ENCODE measurements at regions of chr1 and their contacts with region 1.

Region 1: DNA sequence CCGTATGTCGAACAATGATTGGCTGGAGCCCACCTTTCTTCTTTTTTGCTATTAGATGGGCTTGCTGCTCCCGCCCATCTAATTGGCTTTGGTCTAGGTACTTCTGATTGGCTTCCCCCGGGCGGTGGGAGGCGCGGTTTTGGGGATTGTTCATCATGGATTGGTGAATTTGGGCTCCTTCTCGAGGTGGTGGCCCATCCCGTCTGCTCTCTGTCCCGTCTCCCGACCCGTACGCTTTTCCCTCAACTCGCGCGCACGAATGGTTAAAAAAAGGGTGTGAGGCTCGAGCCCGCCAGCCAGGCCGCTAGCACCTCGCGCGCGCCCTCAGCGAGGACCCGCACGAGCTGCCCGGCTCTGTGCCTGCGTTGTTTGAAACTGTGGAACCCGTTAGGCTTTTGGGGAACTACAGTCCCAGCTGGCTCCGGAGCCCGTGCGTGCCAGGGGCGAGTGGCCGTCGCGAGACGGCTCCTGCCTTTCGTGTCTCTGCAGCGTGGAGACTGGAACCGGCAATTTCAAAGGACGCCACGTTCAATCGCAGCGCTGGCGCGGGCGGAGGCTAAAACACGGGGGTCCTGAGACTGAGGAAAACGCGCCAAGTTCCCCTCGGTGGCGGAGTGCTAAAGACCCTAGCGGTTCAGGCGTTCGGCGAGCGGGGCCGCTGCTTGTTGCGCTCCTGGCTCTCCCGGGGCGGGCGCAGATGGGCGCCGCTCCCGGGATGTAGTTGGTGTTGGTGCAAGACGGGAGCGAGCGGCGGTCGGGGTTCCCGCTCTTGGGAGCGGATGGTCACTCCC is at the start of gene USP1:
- DNase-seq: peak; percentile 99
- H3K4me3 Mint-ChIP-seq: peak within 1 kb of the TSS; percentile 97
- H3K27ac Mint-ChIP-seq: peak within 1 kb of the TSS; percentile 99
- H3K4me1 Mint-ChIP-seq: peaks cover 25% of the 10 kb centered on the region
- H3K27me3 Mint-ChIP-seq: no peaks in the 10 kb centered on the region
- total RNA-seq, gene USP1: 68.4 to 69.7 TPM

Region 2: DNA sequence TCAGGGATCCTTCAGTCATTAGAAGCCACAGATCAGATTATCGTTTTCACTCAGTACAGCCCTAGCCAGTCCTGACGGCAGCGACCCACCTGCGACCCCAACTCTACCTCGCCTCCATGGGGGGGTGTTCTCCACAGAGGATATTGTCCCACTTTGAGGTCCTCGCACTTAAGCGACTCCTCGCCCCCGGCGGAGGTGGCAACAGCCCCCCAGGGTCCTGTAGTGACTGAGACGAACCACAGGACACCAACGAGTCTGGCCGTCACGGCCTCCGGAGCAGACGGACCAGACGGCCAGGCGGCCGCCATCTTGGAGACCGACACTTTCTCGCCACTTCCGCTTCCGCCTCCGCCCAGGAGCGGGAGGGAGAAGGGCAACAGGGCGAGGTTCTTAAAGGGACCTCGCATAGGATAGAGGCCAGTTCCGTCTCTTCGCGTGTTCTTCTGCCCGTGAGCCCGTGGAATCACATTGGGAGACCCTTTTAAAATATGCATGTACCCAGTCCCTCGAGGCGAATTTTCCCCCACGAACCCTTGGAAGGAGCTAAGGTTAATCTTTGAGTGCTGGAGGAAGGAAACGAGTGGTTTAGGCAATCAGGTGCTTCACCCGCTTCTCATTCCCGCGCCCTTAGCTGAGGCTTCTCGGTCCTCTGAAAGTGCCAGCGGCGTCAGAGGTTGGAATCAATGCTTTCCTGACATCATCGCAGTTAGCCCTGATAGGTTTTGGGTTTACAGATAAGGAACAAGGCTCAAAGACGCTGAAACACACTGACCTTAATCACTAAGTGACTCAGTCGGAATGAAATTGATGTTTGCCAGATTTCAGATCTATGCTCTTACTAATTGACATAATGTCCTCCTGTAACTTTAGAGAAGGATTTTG is 711.6 kb before region 1 on chr1 and contains the start of gene TM2D1:
- CTCF ChIA-PET with region 1: no interaction called
- POLR2A ChIA-PET with region 1: interaction called, 5 read pairs
- intact Hi-C with region 1: loop called (anchors 2 kb)
- DNase-seq: peak; percentile 93
- H3K4me3 Mint-ChIP-seq: peak within 1 kb of the TSS; percentile 98
- H3K27ac Mint-ChIP-seq: peak within 1 kb of the TSS; percentile 99
- H3K4me1 Mint-ChIP-seq: peaks cover 18% of the 10 kb centered on the region
- H3K27me3 Mint-ChIP-seq: no peaks in the 10 kb centered on the region
- total RNA-seq, gene TM2D1: 29.7 to 34.3 TPM

Region 3: GRCh38 chr1:62318756-62319544 is 117.7 kb before region 1 on chr1 and contains the start of gene KANK4:
- CTCF ChIA-PET with region 1: no interaction called
- POLR2A ChIA-PET with region 1: no interaction called
- intact Hi-C with region 1: no loop called
- DNase-seq: no peak
- H3K4me3 Mint-ChIP-seq: no peak within 1 kb of the TSS
- H3K27ac Mint-ChIP-seq: no peak within 1 kb of the TSS
- H3K4me1 Mint-ChIP-seq: no peaks in the 10 kb centered on the region
- H3K27me3 Mint-ChIP-seq: peaks cover 36% of the 10 kb centered on the region
- total RNA-seq, gene KANK4: not detected

Region 4: DNA sequence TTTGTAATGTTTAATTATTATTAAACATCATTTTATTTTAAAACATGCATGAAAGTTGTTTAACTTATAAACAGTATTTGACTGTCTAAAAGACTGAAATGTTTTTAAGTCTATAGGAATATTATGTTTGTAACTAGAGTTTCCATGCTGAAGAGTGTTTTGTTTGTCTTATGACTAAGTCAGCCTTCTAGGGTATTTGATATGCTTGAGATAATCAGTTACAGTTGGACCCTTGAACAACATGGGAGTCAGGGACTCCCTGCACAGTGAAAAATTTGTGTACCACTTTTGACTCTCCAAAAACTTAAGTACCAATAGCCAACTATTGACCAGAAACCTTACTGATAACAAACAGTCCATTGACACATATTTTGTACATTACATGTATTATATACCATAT is 71.9 kb before region 1 on chr1:
- CTCF ChIA-PET with region 1: no interaction called
- POLR2A ChIA-PET with region 1: no interaction called
- intact Hi-C with region 1: no loop called
- DNase-seq: no peak
- H3K4me3 Mint-ChIP-seq: no peak overlapping the region
- H3K27ac Mint-ChIP-seq: no peak overlapping the region
- H3K4me1 Mint-ChIP-seq: no peaks in the 10 kb centered on the region
- H3K27me3 Mint-ChIP-seq: peaks cover 6% of the 10 kb centered on the region

Region 5: GRCh38 chr1:62377043-62377562 is 59.6 kb before region 1 on chr1:
- CTCF ChIA-PET with region 1: no interaction called
- POLR2A ChIA-PET with region 1: no interaction called
- intact Hi-C with region 1: no loop called
- DNase-seq: no peak
- H3K4me3 Mint-ChIP-seq: no peak overlapping the region
- H3K27ac Mint-ChIP-seq: no peak overlapping the region
- H3K4me1 Mint-ChIP-seq: no peaks in the 10 kb centered on the region
- H3K27me3 Mint-ChIP-seq: no peaks in the 10 kb centered on the region

Region 6: DNA sequence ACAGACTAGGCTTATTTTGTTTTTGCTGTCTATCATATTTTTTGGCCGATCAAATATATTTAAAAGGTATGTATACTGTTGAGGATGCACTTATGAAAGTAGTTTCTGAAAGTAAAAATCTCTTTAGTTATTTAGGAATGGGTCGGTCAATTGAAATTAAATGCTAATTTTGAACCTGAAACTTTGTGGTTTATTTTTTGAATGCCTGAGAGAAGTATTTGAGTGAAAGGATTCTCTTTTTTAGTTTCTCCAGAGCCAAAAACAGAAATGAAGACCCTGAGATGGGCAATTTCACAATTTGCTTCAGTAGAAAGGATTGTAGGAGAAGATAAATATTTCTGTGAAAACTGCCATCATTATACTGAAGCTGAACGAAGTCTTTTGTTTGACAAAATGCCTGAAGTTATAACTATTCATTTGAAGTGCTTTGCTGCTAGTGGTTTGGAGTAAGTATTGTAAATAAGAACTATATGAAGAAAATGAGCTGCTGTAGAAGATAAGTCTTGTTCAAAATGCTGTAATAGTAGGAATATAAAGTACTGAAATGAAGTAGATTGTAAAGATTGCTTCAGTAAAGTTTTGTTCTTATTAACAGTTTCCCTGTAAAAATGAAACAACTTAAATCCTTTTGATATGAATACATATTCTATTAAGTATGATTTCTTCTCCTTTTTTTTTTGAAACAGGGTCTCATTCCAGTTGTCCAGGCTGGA is 11.7 kb after region 1 on chr1:
- CTCF ChIA-PET with region 1: no interaction called
- POLR2A ChIA-PET with region 1: interaction called, 7 read pairs
- intact Hi-C with region 1: loop called (anchors 1 kb)
- DNase-seq: no peak
- H3K4me3 Mint-ChIP-seq: no peak overlapping the region
- H3K27ac Mint-ChIP-seq: peak overlapping the region; percentile 62
- H3K4me1 Mint-ChIP-seq: peaks cover 33% of the 10 kb centered on the region
- H3K27me3 Mint-ChIP-seq: no peaks in the 10 kb centered on the region

Region 7: GRCh38 chr1:62514746-62515423 is 78.2 kb after region 1 on chr1:
- CTCF ChIA-PET with region 1: no interaction called
- POLR2A ChIA-PET with region 1: no interaction called
- intact Hi-C with region 1: no loop called
- DNase-seq: no peak
- H3K4me3 Mint-ChIP-seq: no peak overlapping the region
- H3K27ac Mint-ChIP-seq: no peak overlapping the region
- H3K4me1 Mint-ChIP-seq: no peaks in the 10 kb centered on the region
- H3K27me3 Mint-ChIP-seq: no peaks in the 10 kb centered on the region

Region 8: DNA sequence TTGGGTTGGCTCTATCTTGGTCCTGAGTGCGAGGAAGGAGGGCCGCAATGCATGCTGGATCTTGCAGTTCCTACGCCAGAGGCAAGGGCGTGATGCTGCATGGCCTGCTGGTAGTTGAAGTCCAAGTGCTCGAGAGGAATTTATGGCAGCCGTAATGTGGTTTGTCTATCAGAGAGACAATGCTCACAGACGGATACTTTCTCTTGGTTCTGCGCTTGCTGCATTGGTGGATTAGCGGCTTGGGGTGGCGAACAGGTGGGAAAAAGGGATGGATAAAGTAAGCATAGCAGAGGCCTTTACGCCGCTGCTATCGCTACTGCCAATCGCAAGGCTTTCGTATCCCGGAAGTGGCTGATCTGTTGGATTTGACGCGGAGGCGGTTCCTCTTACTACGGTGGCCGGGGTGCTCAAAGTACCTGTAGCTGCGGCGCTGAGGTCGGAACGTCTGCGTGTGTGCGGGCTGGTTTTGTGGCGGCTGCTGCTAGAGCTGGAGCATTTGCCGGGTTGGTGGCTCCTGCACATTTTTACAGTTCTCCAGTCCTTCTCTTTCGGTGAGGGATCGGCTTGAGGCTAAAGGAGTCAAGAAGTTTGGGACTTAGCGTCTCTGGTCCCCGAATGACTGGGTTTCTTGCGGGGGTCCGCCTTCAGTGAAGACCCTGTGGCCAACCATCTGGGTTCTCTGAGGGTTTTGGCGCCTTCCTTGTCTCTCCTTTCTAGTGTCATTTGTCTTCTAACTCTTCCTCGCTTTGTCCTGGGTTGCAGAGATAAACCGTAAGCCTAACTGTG is 347.3 kb after region 1 on chr1 and contains the start of gene ATG4C:
- CTCF ChIA-PET with region 1: no interaction called
- POLR2A ChIA-PET with region 1: interaction called, 4 read pairs
- intact Hi-C with region 1: loop called (anchors 1 kb)
- DNase-seq: peak; percentile 95
- H3K4me3 Mint-ChIP-seq: no peak within 1 kb of the TSS
- H3K27ac Mint-ChIP-seq: no peak within 1 kb of the TSS
- H3K4me1 Mint-ChIP-seq: peaks cover 11% of the 10 kb centered on the region
- H3K27me3 Mint-ChIP-seq: peaks cover 4% of the 10 kb centered on the region
- total RNA-seq, gene ATG4C: 14.6 to 15.9 TPM

Region 9: DNA sequence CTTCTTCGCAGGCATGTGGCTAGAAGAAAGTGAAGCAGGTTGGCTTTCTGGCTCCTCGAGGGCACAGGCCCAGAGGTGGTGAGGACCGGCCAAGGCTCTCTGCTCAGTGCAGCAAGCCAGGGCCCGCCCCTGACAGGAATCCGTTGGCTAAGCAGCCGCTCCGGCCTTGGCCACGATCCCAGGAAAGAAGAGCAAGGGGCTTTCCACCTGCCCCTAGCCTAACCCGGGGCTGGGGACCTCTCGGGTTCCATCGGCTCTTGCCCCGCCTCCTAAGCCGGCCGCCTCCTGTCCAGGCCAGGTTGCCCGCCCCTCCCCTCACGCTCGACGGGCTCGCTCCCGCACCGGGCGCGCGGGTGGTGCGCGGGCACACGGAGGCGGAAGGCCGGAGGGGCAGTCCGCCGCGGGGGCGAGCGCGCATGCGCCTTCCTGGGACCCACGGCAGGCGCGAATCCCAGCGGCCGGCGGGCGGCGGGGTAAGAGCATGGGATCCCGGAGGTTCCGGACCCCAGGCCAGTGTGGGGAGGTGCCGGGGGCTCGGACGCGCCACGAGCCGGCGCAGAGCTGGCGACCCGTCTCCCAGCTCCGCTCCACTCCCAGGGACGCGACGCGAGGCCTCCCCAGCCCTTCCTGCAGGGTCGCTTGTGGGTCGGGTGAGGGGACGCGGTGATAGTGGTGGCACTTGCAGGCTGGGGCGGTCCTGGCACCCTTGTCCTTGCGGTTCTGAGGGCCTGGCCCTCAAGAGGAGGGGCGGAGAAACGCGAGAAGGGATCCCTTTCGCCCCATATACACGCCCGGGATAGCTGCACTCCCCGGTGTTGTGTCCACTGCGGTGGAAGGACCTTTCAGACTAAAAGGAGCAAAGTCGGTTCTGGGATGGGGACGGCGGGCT is 930.8 kb after region 1 on chr1 and contains the start of gene ALG6:
- CTCF ChIA-PET with region 1: no interaction called
- POLR2A ChIA-PET with region 1: no interaction called
- intact Hi-C with region 1: loop called (anchors 1 kb)
- DNase-seq: peak; percentile 94
- H3K4me3 Mint-ChIP-seq: peak within 1 kb of the TSS; percentile 97
- H3K27ac Mint-ChIP-seq: peak within 1 kb of the TSS; percentile 74
- H3K4me1 Mint-ChIP-seq: peaks cover 21% of the 10 kb centered on the region
- H3K27me3 Mint-ChIP-seq: peaks cover 3% of the 10 kb centered on the region
- total RNA-seq, gene ALG6: 16.0 to 18.8 TPM

Region 10: GRCh38 chr1:63593303-63593885 is 1156.7 kb after region 1 on chr1 and contains the start of gene PGM1:
- CTCF ChIA-PET with region 1: no interaction called
- POLR2A ChIA-PET with region 1: no interaction called
- intact Hi-C with region 1: loop called (anchors 5 kb)
- DNase-seq: peak; percentile 84
- H3K4me3 Mint-ChIP-seq: peak within 1 kb of the TSS; percentile 95
- H3K27ac Mint-ChIP-seq: peak within 1 kb of the TSS; percentile 98
- H3K4me1 Mint-ChIP-seq: peaks cover 28% of the 10 kb centered on the region
- H3K27me3 Mint-ChIP-seq: no peaks in the 10 kb centered on the region
- total RNA-seq, gene PGM1: 31.9 to 32.4 TPM

Measured in activated CD4-positive, alpha-beta memory T cell treated with anti-CD3 and anti-CD28 coated beads for 36 hours (primary cell).